CD8-positive, alpha-beta memory T cell (primary cell): ENCODE measurements at regions of chr12 and their contacts with region 1.

Region 1: GRCh38 chr12:132904718-132905328 is 17.4 kb upstream of the CHFR start:
- DNase-seq: peak; percentile 79 to 92 (median 85)
- H3K4me3 ChIP-seq: no peak overlapping the region
- H3K4me3 Mint-ChIP-seq: peak overlapping the region; percentile 28 to 71 (median 48)
- H3K27ac ChIP-seq: no peak overlapping the region
- H3K27ac Mint-ChIP-seq: peak overlapping the region in 5 of 8 donors; percentile 55 to 77 (median 72)
- H3K4me1 ChIP-seq: peaks cover 7% of the 10 kb centered on the region
- H3K4me1 Mint-ChIP-seq: peaks cover 9 to 26% (median 21%) of the 10 kb centered on the region in 3 donors
- H3K27me3 ChIP-seq: no peaks in the 10 kb centered on the region
- H3K27me3 Mint-ChIP-seq: no peaks in the 10 kb centered on the region

Region 2: GRCh38 chr12:132766380-132767085 is 138.3 kb before region 1 on chr12:
- CTCF ChIA-PET with region 1: interaction called, 22 read pairs
- POLR2A ChIA-PET with region 1: interaction called, 3 read pairs
- DNase-seq: no peak
- H3K4me3 ChIP-seq: no peak overlapping the region
- H3K4me3 Mint-ChIP-seq: peak overlapping the region in 1 of 7 donors; percentile 36
- H3K27ac ChIP-seq: no peak overlapping the region
- H3K27ac Mint-ChIP-seq: peak overlapping the region in 1 of 8 donors; percentile 67
- H3K4me1 ChIP-seq: peaks cover 47% of the 10 kb centered on the region
- H3K4me1 Mint-ChIP-seq: peaks cover 11 to 19% (median 18%) of the 10 kb centered on the region in 3 donors
- H3K27me3 ChIP-seq: no peaks in the 10 kb centered on the region
- H3K27me3 Mint-ChIP-seq: no peaks in the 10 kb centered on the region

Region 3: DNA sequence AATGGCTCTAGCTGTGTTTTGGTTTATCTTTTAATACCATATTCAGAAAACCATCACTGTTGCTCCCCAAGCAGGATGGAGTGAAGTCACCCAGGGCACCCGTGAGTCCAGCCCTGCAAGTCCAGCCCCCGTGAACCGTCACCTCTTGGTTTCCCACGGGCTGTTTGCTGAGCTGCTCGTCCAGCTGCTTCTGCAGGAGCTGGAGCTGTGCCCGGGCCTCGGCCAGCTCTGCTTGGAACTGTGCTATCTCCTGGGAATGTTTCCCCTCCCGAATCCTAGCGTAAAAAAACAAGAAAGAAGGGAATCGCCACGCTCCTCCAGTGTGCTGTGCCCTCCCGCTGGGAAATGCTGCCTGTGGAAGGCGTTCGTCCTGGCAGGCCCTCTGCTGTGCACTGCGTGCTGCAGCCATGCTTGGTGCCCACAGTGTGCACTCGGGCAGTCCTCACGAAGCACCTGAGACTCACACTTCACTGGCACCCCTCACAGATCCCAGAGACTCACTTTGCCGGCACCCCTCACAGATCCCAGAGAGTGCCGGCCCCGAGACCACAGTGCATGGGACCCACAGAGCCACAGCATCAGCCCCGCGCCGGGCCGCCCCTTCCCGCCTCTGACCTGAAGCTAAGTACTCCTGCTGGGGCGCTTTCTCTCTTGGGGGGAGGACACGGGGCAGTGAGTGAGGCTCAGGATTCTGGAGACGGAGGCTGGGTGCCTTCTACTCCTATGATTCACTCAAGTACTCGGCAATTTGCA is 127.8 kb before region 1 on chr12:
- CTCF ChIA-PET with region 1: interaction called, 11 read pairs
- POLR2A ChIA-PET with region 1: no interaction called
- DNase-seq: no peak
- H3K4me3 ChIP-seq: no peak overlapping the region
- H3K4me3 Mint-ChIP-seq: no peak overlapping the region
- H3K27ac ChIP-seq: no peak overlapping the region
- H3K27ac Mint-ChIP-seq: peak overlapping the region in 2 of 8 donors; percentile 15 to 51
- H3K4me1 ChIP-seq: peaks cover 12% of the 10 kb centered on the region
- H3K4me1 Mint-ChIP-seq: peaks cover 0 to 2% (median 2%) of the 10 kb centered on the region in 3 donors
- H3K27me3 ChIP-seq: no peaks in the 10 kb centered on the region
- H3K27me3 Mint-ChIP-seq: no peaks in the 10 kb centered on the region

Region 4: DNA sequence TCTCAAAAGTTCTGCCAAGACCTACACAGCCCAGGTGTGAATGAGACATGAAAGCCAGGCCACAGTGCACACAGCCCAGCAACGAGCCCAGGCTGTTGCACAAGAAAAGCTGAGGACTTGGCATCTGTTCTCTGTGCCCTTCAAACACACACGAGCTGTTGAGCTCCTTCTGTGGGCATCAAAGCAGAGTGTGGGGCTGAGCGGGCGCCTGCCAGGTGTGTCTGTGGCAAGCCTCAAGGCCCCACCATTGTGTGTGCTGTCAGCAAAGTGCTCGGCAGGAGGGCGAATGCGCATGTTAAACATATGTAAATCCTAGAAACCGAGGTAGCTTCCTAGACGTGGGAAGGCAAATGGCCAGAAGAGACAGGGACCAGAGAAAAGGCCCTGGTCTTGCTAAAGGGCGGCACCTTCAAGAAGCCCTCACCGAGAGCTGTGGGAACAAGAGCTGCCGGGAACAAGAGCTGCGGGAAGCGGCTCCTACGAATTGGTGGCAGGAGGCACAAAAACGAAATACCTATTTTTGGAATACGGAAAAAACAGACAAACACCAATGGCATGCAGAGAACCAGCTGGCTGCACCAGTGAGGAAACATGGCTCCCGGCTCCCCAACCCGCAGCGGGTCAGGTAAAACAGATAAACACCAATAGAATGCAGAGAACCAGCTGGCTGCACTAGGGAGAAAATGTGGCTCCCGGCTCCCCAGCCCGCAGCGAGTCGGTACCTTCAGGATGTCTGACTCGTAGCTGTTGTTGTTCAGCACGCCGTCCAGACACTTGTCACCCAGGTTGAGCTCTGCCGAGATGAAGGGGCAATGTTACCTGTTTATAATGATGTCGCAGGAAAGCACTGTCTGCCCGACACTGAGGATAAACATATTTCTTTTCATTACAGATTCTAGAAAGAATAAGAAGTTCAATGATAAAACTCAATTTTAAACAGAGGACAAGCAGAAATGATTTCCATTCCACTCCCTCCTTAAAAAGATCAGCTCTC is 57.2 kb before region 1 on chr12:
- CTCF ChIA-PET with region 1: no interaction called
- POLR2A ChIA-PET with region 1: no interaction called
- DNase-seq: peak in 1 of 5 donors; percentile 71
- H3K4me3 ChIP-seq: no peak overlapping the region
- H3K4me3 Mint-ChIP-seq: no peak overlapping the region
- H3K27ac ChIP-seq: no peak overlapping the region
- H3K27ac Mint-ChIP-seq: peak overlapping the region in 3 of 8 donors; percentile 26 to 67 (median 54)
- H3K4me1 ChIP-seq: no peaks in the 10 kb centered on the region
- H3K4me1 Mint-ChIP-seq: no peaks in the 10 kb centered on the region
- H3K27me3 ChIP-seq: no peaks in the 10 kb centered on the region
- H3K27me3 Mint-ChIP-seq: no peaks in the 10 kb centered on the region

Region 5: GRCh38 chr12:132881818-132882217 is 23.0 kb before region 1 on chr12:
- CTCF ChIA-PET with region 1: interaction called, 17 read pairs
- POLR2A ChIA-PET with region 1: no interaction called
- DNase-seq: no peak
- H3K4me3 ChIP-seq: no peak overlapping the region
- H3K4me3 Mint-ChIP-seq: peak overlapping the region in 1 of 7 donors; percentile 67
- H3K27ac ChIP-seq: no peak overlapping the region
- H3K27ac Mint-ChIP-seq: peak overlapping the region in 1 of 8 donors; percentile 23
- H3K4me1 ChIP-seq: peaks cover 6% of the 10 kb centered on the region
- H3K4me1 Mint-ChIP-seq: peaks cover 36 to 57% (median 45%) of the 10 kb centered on the region in 3 donors
- H3K27me3 ChIP-seq: no peaks in the 10 kb centered on the region
- H3K27me3 Mint-ChIP-seq: no peaks in the 10 kb centered on the region